ENCODE measurements at regions of chr19 and their contacts with region 1.

Region 1: GRCh38 chr19:984165-984967 is at the start of gene WDR18:
- DNase-seq: peak; percentile 90 to 93
- H3K4me3 ChIP-seq: peak within 1 kb of the TSS; percentile 78 to 100 (median 95)
- H3K27ac ChIP-seq: peak within 1 kb of the TSS; percentile 89 to 91
- H3K4me1 ChIP-seq: no peaks in the 10 kb centered on the region
- H3K27me3 ChIP-seq: no peaks in the 10 kb centered on the region
- CTCF ChIP-seq: peak in 2 of 3 donors; percentile 29 to 45
- POLR2A ChIP-seq: no peak
- total RNA-seq, gene WDR18: 19.2 to 69.2 (median 49.8) TPM

Region 2: GRCh38 chr19:752652-753517 is 231.5 kb before region 1 on chr19:
- intact Hi-C with region 1: loop called (anchors 10 kb)
- DNase-seq: peak in 1 of 2 donors; percentile 71
- H3K4me3 ChIP-seq: peak overlapping the region in 1 of 3 donors; percentile 31
- H3K27ac ChIP-seq: peak overlapping the region in 1 of 2 donors; percentile 72
- H3K4me1 ChIP-seq: no peaks in the 10 kb centered on the region
- H3K27me3 ChIP-seq: no peaks in the 10 kb centered on the region
- CTCF ChIP-seq: no peak
- POLR2A ChIP-seq: no peak

Region 3: GRCh38 chr19:858868-859843 is 125.2 kb before region 1 on chr19 and contains the start of gene CFD:
- intact Hi-C with region 1: loop called (anchors 5 kb)
- DNase-seq: no peak
- H3K4me3 ChIP-seq: peak within 1 kb of the TSS; percentile 49 to 77 (median 52)
- H3K27ac ChIP-seq: peak within 1 kb of the TSS; percentile 60 to 75
- H3K4me1 ChIP-seq: peaks cover 6 to 10% of the 10 kb centered on the region in 2 donors
- H3K27me3 ChIP-seq: peaks cover 0 to 3% of the 10 kb centered on the region in 2 donors
- CTCF ChIP-seq: no peak
- POLR2A ChIP-seq: no peak
- total RNA-seq, gene CFD: 345 to 6,770 (median 797) TPM

Region 4: DNA sequence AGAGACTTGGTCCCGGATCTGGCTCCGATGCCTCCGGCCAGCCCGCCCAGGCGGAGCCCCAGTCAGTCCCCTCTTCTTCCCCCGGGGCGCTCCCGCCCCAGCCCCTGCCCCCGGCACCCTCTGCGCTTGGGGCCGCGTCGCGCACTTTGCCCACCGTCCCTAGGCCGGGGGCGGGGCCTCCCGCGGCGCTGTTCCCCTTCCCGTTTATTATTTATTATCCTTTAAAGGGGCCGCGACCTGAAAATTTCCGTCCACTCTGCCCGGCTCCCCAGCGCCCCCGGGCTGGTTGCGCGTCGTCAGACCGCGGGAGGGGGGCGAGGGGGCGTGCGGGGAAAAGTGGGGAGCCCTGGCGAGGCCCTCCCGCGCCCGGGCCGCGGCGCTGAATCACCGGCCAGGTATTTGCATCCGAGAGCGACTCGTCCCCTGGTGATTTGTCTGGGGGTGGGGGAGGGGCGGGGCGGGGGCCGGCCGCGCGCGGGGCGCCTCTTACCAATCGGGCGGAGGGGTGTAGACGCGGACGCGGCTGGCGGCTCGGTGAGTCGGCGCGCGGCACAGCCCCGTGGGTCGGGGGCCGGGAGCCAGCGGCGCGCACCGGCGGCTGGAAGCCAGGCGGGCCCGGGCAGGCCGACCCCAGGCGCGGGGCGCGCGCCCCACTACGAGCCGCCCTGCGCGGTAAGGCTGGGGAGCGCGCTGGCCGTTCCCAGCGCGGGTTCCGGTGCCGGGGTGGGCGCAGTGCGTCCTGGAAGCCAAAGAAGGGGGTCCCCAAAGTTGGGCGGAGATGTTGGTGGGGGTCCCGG is 58.6 kb before region 1 on chr19 and contains the start of gene ARID3A:
- intact Hi-C with region 1: loop called (anchors 1 kb)
- DNase-seq: peak; percentile 70 to 72
- H3K4me3 ChIP-seq: peak within 1 kb of the TSS; percentile 84 to 91 (median 86)
- H3K27ac ChIP-seq: peak within 1 kb of the TSS; percentile 83 to 86
- H3K4me1 ChIP-seq: no peaks in the 10 kb centered on the region
- H3K27me3 ChIP-seq: peaks cover 0 to 6% of the 10 kb centered on the region in 2 donors
- CTCF ChIP-seq: no peak
- POLR2A ChIP-seq: no peak
- total RNA-seq, gene ARID3A: 3.5 to 11.1 (median 4.8) TPM

Region 5: DNA sequence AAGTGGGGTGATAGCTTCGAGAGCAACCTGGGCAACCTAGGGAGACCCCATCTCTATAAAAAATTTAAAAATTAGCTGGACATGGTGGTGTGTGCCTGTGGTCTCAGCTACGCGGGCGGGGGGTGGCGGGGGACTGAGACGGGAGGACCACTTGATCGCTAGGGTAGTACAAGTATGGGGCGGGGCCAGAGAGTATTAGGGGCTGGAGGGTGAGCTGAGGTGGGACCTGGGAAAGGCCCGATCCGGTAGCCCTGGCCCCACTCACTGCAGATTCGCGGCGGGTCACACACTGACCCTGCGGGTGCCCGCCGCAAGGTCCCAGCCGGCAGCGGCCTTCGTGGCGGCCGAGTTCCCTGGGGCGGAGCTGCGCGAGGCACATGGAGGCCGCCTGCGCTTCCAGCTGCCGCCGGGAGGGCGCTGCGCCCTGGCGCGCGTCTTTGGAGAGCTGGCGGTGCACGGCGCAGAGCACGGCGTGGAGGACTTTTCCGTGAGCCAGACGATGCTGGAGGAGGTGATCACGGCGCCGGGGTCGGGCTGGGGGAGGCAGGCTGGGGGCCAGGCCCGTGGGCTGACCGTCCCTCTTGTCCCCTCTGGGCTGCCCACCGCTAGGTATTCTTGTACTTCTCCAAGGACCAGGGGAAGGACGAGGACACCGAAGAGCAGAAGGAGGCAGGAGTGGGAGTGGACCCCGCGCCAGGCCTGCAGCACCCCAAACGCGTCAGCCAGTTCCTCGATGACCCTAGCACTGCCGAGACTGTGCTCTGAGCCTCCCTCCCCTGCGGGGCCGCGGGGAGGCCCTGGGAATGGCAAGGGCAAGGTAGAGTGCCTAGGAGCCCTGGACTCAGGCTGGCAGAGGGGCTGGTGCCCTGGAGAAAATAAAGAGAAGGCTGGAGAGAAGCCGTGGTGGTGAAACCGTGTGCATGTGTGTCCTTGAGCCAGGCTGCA is 80.6 kb after region 1 on chr19:
- intact Hi-C with region 1: no loop called
- DNase-seq: no peak
- H3K4me3 ChIP-seq: peak overlapping the region in 1 of 3 donors; percentile 34
- H3K27ac ChIP-seq: no peak overlapping the region
- H3K4me1 ChIP-seq: peaks cover 9 to 19% of the 10 kb centered on the region in 2 donors
- H3K27me3 ChIP-seq: peaks cover 5 to 43% of the 10 kb centered on the region in 2 donors
- CTCF ChIP-seq: peak; percentile 75 to 85 (median 76)
- POLR2A ChIP-seq: no peak

Measured in breast epithelium (tissue), 4 donors.